SK-N-SH (cell line): ENCODE measurements at regions of chr11 and their contacts with region 1.

Region 1: DNA sequence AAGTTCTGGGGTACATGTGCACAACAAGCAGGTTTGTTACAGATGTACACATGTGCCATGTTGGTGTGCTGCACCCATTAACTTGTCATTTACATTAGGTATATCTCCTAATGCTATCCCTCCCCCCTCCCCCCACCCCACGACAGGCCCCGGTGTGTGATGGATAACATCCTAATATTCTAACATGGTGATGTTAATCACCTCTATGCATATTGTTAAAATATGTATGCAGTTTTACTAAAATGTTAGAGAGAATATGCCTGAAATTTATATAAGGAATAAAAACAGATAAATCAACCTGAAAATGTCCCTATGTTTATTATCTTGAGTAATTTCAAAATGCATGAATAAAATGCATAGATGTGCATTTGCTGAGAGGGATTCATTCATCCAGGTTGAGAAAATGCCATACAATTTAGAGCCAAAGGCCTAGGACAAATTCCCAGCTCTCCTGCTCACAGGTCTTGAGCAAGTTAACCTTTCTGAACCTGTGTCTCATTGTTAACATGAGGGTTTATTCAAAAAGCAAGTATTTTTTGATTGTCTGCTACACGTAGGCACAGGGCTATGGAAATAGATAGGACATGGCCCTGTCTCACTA is 38.7 kb downstream of the APIP start:
- DNase-seq: no peak
- H3K4me3 ChIP-seq: no peak overlapping the region
- H3K27ac ChIP-seq: no peak overlapping the region
- H3K4me1 ChIP-seq: peaks cover 0 to 4% of the 10 kb centered on the region in 2 experiments; a peak in 1 of 4 replicates
- H3K27me3 ChIP-seq: no peaks in the 10 kb centered on the region
- CTCF ChIP-seq: no peak
- EP300 ChIP-seq: no peak
- RAD21 ChIP-seq: no peak

Region 2: GRCh38 chr11:34640050-34640923 is 237.2 kb before region 1 on chr11:
- CTCF ChIA-PET with region 1: no interaction called
- POLR2A ChIA-PET with region 1: no interaction called
- DNase-seq: no peak
- H3K4me3 ChIP-seq: no peak overlapping the region
- H3K27ac ChIP-seq: no peak overlapping the region
- H3K4me1 ChIP-seq: peaks cover 0 to 2% of the 10 kb centered on the region in 2 experiments; a peak in 1 of 4 replicates
- H3K27me3 ChIP-seq: no peaks in the 10 kb centered on the region; the same call in 1 of the 2 replicates
- CTCF ChIP-seq: no peak
- EP300 ChIP-seq: no peak
- RAD21 ChIP-seq: no peak

Region 3: DNA sequence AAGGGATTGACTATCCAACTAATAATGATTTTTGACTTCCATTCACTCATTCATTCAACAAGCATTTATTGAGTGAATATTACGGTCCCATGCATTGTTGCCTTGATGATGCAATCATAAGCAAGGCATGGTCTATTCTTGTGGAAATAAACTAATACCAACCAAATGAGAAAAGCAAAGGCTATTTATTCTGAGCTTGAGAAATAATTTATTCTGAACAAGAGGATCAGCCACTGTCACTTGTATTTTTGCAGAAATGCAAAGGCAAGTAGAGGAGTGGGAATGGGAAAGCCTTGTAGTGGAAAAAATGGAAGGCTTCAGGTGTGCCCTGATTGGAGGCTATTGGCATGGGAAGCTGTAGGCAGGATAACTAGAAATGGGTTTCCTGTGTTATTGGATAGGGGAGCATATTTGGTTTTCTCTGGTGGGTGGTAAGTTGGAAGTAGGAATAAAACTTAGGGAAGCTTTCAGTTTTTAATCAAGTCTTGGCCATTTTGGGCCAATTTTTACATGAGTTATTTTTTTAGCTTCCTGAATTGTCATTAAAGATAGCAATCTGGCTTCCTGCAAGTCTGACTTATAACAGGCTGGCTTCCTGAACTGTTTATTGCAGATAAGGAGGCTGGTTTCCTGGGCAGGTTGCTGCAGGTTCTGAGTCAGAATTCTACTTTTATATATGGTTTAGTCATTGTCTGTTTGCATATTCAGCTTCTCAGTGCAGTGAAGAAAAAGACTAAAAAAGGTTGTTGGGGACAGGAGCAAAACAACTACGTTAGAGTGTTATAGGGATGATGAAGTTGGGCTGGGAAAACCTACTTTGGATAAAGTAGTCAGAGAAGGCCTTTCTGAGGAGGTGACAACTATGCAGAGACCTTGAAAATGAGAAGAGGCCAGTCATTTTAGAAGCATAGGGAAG is 68.0 kb before region 1 on chr11:
- CTCF ChIA-PET with region 1: no interaction called
- POLR2A ChIA-PET with region 1: no interaction called
- DNase-seq: no peak
- H3K4me3 ChIP-seq: no peak overlapping the region
- H3K27ac ChIP-seq: no peak overlapping the region
- H3K4me1 ChIP-seq: no peaks in the 10 kb centered on the region
- H3K27me3 ChIP-seq: 0 out of 2 replicates have a peak, but pooled peaks cover 4% of the 10 kb centered on the region
- CTCF ChIP-seq: no peak
- EP300 ChIP-seq: no peak
- RAD21 ChIP-seq: no peak

Region 4: DNA sequence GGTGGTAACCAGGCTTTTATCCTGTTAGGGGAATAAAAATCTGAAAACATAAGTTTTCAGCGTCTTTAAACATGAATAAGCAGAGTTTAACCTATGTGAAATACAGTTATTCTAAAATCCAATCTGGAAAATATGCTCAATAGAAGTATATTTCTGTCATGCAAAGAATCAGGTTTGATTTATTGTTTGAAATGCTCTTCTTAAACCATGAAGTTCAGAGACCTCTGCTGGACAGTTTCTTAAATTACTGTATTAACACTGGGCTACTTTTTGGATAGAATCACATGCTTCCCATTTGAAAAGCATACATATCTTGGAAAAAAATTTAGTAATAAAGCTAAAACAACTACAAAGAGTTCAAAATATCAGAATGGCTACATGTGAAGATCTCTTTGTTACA is 13.3 kb after region 1 on chr11:
- CTCF ChIA-PET with region 1: interaction called, 12 read pairs
- POLR2A ChIA-PET with region 1: no interaction called
- DNase-seq: peak; percentile 28
- H3K4me3 ChIP-seq: no peak overlapping the region
- H3K27ac ChIP-seq: no peak overlapping the region
- H3K4me1 ChIP-seq: no peaks in the 10 kb centered on the region
- H3K27me3 ChIP-seq: no peaks in the 10 kb centered on the region
- CTCF ChIP-seq: peak; percentile 70
- EP300 ChIP-seq: no peak
- RAD21 ChIP-seq: peak; percentile 74